CD8-positive, alpha-beta memory T cell (primary cell): ENCODE measurements at regions of chr6 and their contacts with region 1.

Region 1: DNA sequence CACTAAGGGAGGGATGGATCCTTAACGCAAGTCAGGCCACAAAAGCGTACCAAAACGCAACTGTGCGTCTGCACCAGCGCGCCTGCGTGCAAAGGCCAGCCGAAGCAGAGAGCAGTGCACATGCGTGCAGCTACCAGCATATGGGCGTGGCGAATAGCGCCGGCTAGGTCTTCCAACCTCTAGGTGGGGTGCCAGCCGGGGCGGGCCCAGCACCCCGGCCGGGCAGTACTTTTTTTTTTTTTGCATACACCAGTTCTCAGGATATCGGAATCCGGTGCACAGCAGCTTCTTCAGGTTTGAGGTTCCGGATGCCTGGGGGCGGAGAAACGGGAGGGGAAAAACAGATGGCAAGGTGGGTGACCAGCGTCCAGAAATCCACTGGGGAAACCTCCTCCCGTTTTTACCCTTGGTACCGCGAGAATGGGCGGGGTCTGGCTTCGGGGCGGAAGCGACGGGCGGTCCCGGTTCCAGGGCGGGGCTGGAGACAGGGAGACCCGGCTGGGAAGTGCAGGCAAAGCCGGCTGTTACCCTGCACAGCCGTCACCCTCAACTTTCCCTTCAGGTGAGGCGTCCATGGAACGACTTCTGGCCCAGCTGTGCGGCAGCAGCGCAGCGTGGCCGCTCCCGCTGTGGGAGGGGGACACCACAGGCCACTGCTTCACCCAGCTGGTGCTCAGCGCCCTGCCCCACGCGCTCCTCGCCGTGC is at the start of gene ABCC10:
- DNase-seq: peak; percentile 91 to 97 (median 95)
- H3K4me3 ChIP-seq: peak within 1 kb of the TSS; percentile 82
- H3K4me3 Mint-ChIP-seq: peak within 1 kb of the TSS; percentile 93 to 99 (median 96)
- H3K27ac ChIP-seq: peak within 1 kb of the TSS; percentile 81
- H3K27ac Mint-ChIP-seq: peak within 1 kb of the TSS; percentile 85 to 99 (median 97)
- H3K4me1 ChIP-seq: peaks cover 16% of the 10 kb centered on the region
- H3K4me1 Mint-ChIP-seq: peaks cover 24 to 39% (median 27%) of the 10 kb centered on the region in 3 donors
- H3K27me3 ChIP-seq: no peaks in the 10 kb centered on the region
- H3K27me3 Mint-ChIP-seq: peaks cover 0 to 2% of the 10 kb centered on the region in 2 donors
- total RNA-seq, gene ABCC10: 35.8 to 36.4 TPM

Region 2: DNA sequence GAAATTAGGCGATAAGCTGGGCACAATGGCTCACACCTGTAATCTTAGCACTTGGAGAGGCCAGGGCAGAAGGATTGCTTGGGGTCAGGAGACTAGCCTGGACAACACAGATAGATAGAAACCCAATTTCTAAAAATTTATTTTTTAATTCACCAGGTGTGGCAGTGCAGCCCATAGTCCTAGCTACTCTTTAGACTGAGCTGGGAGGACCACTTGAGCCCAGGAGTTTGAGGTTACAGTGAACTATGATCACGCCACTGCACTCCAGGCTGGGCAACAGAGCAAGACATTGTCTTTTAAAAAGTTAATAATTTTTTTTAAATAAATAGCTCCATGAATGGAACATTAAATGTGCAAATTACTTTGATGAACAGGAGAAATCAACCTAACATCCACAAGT is 66.3 kb before region 1 on chr6:
- CTCF ChIA-PET with region 1: no interaction called
- POLR2A ChIA-PET with region 1: interaction called, 15 read pairs
- DNase-seq: no peak
- H3K4me3 ChIP-seq: no peak overlapping the region
- H3K4me3 Mint-ChIP-seq: no peak overlapping the region
- H3K27ac ChIP-seq: no peak overlapping the region
- H3K27ac Mint-ChIP-seq: peak overlapping the region in 1 of 8 donors; percentile 54
- H3K4me1 ChIP-seq: peaks cover 5% of the 10 kb centered on the region
- H3K4me1 Mint-ChIP-seq: peaks cover 22 to 58% (median 41%) of the 10 kb centered on the region in 3 donors
- H3K27me3 ChIP-seq: no peaks in the 10 kb centered on the region
- H3K27me3 Mint-ChIP-seq: no peaks in the 10 kb centered on the region

Region 3: GRCh38 chr6:43389730-43390295 is 37.7 kb before region 1 on chr6:
- CTCF ChIA-PET with region 1: no interaction called
- POLR2A ChIA-PET with region 1: no interaction called
- DNase-seq: no peak
- H3K4me3 ChIP-seq: no peak overlapping the region
- H3K4me3 Mint-ChIP-seq: no peak overlapping the region
- H3K27ac ChIP-seq: no peak overlapping the region
- H3K27ac Mint-ChIP-seq: no peak overlapping the region
- H3K4me1 ChIP-seq: peaks cover 36% of the 10 kb centered on the region
- H3K4me1 Mint-ChIP-seq: peaks cover 46 to 56% (median 52%) of the 10 kb centered on the region in 3 donors
- H3K27me3 ChIP-seq: no peaks in the 10 kb centered on the region
- H3K27me3 Mint-ChIP-seq: peaks cover 7 to 16% of the 10 kb centered on the region in 2 donors